Testis (tissue), 5 donors: ENCODE measurements at regions of chr11 and their contacts with region 1.

Region 1: GRCh38 chr11:134139873-134140331 is 71.0 kb downstream of the JAM3 start:
- DNase-seq: peak; percentile 83
- H3K4me3 ChIP-seq: no peak overlapping the region
- H3K27ac ChIP-seq: peak overlapping the region; percentile 44 to 83
- H3K4me1 ChIP-seq: peaks cover 3% of the 10 kb centered on the region
- H3K27me3 ChIP-seq: no peaks in the 10 kb centered on the region
- CTCF ChIP-seq: peak; percentile 77 to 88 (median 87)
- POLR2A ChIP-seq: no peak

Region 2: GRCh38 chr11:133934599-133935550 is 205.0 kb before region 1 on chr11:
- intact Hi-C with region 1: loop called (anchors 10 kb)
- DNase-seq: peak; percentile 95
- H3K4me3 ChIP-seq: no peak overlapping the region
- H3K27ac ChIP-seq: no peak overlapping the region
- H3K4me1 ChIP-seq: no peaks in the 10 kb centered on the region
- H3K27me3 ChIP-seq: no peaks in the 10 kb centered on the region
- CTCF ChIP-seq: no peak
- POLR2A ChIP-seq: no peak

Region 3: GRCh38 chr11:134050541-134051383 is 89.1 kb before region 1 on chr11:
- intact Hi-C with region 1: loop called (anchors 10 kb)
- DNase-seq: peak; percentile 91
- H3K4me3 ChIP-seq: peak overlapping the region; percentile 50 to 75
- H3K27ac ChIP-seq: peak overlapping the region; percentile 93 to 96
- H3K4me1 ChIP-seq: peaks cover 19% of the 10 kb centered on the region
- H3K27me3 ChIP-seq: no peaks in the 10 kb centered on the region
- CTCF ChIP-seq: peak; percentile 90 to 97 (median 96)
- POLR2A ChIP-seq: no peak

Region 4: GRCh38 chr11:134118006-134118405 is 21.9 kb before region 1 on chr11:
- intact Hi-C with region 1: no loop called
- DNase-seq: no peak
- H3K4me3 ChIP-seq: no peak overlapping the region
- H3K27ac ChIP-seq: no peak overlapping the region
- H3K4me1 ChIP-seq: peaks cover 13% of the 10 kb centered on the region
- H3K27me3 ChIP-seq: no peaks in the 10 kb centered on the region
- CTCF ChIP-seq: no peak
- POLR2A ChIP-seq: no peak

Region 5: DNA sequence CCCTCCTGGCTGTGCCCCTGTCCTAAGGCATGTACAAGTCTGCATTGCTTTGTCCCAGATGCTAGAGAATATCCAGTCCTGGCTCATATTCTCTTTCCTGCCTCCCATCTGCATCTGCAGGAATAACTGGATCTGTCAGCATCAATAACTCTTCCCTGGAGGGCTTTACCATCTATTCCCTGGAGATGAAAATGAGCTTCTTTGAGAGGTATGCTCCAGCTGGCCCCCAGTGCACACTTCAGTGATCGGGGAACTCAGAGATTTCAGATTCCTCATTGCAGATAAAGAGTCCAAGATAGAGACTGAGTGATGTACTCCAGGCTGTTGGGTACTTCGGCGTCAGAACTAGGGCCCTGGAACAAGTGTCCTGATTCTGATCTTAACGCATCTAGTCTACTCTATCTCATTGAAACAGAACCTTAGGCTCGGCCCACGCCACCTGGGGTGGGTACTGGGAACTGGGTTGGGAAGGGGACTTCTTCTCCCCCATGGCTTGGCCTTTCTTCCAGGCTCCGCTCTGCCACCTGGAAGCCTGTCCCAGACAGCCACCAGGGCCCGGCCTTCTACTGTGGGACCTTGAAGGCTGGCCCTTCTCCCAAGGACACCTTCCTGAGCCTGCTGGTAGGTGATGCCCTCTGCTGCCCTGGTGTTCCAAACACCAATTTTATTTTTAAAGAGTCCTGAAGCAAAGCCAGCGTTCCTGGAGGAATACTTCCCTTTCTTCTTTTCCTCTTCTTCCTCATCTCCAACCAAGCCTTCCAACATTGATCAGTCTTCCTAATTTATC is 174.1 kb after region 1 on chr11:
- intact Hi-C with region 1: no loop called
- DNase-seq: no peak
- H3K4me3 ChIP-seq: no peak overlapping the region
- H3K27ac ChIP-seq: no peak overlapping the region
- H3K4me1 ChIP-seq: no peaks in the 10 kb centered on the region
- H3K27me3 ChIP-seq: no peaks in the 10 kb centered on the region
- CTCF ChIP-seq: no peak
- POLR2A ChIP-seq: no peak